ENCODE measurements at regions of chr4 and their contacts with region 1.

Region 1: DNA sequence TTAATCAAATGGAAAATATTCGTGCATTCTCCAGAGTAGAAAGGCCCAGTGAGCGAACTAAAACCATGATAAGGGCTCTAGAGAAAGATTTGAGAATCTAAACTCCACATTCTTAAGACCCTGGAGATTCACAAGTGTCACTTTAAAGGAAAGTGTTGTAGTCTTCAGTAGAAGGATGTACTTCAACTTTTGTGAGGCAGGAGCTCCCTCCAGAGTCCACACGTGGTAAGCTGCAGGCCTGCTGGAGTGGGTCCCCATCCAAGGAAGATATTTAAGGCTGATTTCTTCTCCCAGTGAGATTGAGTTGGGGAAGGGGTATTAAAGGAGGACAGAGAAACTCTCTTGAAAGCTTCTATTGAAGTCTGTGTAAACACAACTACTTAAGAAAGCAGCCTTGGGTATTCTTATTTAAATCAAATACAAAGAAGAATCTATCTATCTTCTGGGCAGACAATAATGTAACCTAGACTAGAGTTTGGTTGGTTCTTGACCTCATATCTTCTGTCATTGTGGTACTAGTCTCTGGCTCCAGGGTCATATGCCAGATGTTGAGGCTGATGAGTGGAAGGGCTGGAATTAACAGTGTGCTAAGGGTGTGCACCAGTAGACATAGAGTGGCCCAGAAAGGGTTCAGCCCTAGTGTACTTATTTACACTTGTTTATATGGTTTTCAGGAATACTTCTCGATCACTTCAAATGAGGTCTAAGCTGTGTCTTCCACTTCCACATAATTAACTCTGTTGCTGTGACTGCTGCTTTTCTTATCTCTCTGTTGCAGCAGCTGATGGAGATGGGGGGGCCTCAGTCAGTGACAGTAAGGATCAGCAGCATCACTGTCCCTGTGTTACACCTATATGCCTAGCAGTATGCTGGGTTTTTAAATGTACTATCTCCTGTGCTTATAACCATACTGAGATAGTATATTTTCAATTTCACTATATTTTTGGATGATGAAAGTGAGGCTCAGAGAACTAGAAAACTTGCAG is 76.1 kb downstream of the HMGB2 start:
- DNase-seq: peak; percentile 67 to 73
- H3K4me3 ChIP-seq: no peak overlapping the region
- H3K27ac ChIP-seq: no peak overlapping the region
- H3K4me1 ChIP-seq: no peaks in the 10 kb centered on the region
- H3K27me3 ChIP-seq: no peaks in the 10 kb centered on the region
- CTCF ChIP-seq: peak; percentile 25 to 91 (median 76)
- POLR2A ChIP-seq: no peak

Region 2: DNA sequence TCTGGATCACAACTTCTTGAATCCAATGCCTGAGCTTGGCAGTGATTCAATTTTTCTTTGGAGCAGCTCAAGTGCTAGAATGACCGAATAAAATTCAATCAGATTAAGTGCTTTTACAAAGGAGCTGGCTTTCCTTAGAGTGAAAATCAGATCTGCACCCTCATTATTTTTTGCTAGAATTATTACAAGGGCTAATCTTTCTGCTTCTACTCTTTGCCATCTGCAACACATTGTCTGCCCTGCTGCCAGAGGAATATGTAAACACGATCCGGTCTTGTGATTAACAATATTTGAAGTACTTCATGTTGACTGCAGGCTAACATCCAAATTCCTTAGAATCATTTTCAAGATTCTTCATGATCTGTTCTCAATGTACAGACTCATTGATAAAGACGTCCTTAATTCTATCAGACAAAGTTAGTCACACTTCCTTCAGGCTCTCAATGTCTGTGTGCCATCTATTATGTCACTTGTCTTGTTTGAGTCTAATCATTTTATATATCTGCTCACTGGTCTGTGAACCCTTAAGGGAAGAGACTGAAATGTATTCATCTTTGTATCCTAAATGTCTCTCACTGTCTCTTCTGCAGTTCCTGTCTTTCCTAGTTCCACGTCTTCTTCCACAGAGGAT is 913.6 kb before region 1 on chr4:
- intact Hi-C with region 1: no loop called
- DNase-seq: no peak
- H3K4me3 ChIP-seq: no peak overlapping the region
- H3K27ac ChIP-seq: no peak overlapping the region
- H3K4me1 ChIP-seq: peaks cover 0 to 8% of the 10 kb centered on the region in 2 donors
- H3K27me3 ChIP-seq: no peaks in the 10 kb centered on the region
- CTCF ChIP-seq: no peak
- POLR2A ChIP-seq: no peak

Region 3: GRCh38 chr4:173019711-173020110 is 238.3 kb before region 1 on chr4:
- intact Hi-C with region 1: loop called (anchors 5 kb)
- DNase-seq: no peak
- H3K4me3 ChIP-seq: no peak overlapping the region
- H3K27ac ChIP-seq: no peak overlapping the region
- H3K4me1 ChIP-seq: no peaks in the 10 kb centered on the region
- H3K27me3 ChIP-seq: no peaks in the 10 kb centered on the region
- CTCF ChIP-seq: no peak
- POLR2A ChIP-seq: no peak

Region 4: DNA sequence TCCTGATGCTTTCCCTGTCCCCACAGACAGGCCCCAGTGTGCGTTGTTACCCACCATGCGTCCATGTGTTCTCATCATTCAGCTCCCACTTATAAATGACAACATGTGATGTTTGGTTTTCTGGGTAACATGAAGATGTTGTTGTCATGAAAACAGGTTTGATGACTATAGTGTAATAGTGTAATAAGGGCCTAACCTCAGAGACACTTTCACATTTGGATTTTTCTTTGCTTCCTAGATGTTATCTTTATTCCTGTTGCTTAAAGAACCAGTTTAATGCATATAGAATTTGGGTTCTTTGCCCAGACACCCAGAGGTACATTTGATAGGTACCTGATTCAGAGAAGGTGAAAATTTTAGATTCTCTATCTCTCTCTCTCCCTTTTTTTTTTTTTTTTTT is 61.3 kb before region 1 on chr4:
- intact Hi-C with region 1: no loop called
- DNase-seq: no peak
- H3K4me3 ChIP-seq: no peak overlapping the region
- H3K27ac ChIP-seq: no peak overlapping the region
- H3K4me1 ChIP-seq: peaks cover 9 to 10% of the 10 kb centered on the region in 2 donors
- H3K27me3 ChIP-seq: no peaks in the 10 kb centered on the region
- CTCF ChIP-seq: no peak
- POLR2A ChIP-seq: no peak

Measured in thyroid gland (tissue), 4 donors.